ENCODE measurements at regions of chr11 and their contacts with region 1.

Region 1: GRCh38 chr11:25734592-25735211 is 597.2 kb upstream of the ANO3 start:
- DNase-seq: peak; percentile 7
- H3K4me3 Mint-ChIP-seq: no peak overlapping the region
- H3K27ac Mint-ChIP-seq: no peak overlapping the region
- H3K4me1 Mint-ChIP-seq: no peaks in the 10 kb centered on the region
- H3K27me3 Mint-ChIP-seq: no peaks in the 10 kb centered on the region
- CTCF ChIP-seq: peak; percentile 14

Region 2: DNA sequence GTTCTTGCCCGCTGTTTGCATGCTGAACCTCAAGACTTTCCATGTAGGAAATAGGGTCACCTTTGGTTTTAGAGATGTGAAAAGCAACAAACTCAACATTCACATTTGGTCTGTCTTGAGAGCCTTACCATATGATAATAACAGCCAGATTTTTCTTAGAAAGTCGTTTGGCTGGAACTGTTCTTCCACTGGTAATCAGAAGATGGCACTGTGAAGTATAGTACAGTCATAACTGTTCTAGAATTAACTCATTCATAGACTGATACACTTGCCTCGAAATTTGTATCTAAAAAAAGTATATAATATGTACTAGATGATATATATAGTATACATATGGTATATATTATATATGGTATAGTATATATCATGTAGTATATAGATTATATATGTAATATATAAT is 1225.6 kb before region 1 on chr11:
- CTCF ChIA-PET with region 1: no interaction called
- intact Hi-C with region 1: loop called (anchors 5 kb)
- DNase-seq: no peak
- H3K4me3 Mint-ChIP-seq: no peak overlapping the region
- H3K27ac Mint-ChIP-seq: no peak overlapping the region
- H3K4me1 Mint-ChIP-seq: peaks cover 24% of the 10 kb centered on the region
- H3K27me3 Mint-ChIP-seq: no peaks in the 10 kb centered on the region
- CTCF ChIP-seq: peak; percentile 20

Region 3: DNA sequence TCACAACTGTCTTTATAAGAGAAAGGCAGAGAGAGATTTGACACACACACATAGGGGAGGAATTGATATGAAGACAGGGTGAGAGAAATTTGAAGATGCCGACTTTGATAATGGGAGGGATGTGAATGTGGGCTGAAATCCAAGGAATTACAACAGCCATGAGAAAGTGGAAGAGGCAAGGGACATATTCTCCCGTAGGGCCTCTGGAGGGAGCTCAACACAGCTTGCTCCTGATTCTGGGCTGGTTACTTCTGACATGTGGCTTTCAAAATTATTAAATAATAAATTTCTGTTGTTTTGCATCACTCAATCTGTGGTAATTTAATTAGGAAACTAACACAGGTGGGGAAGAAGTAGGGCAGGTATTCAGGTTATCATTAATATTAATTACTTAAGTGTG is 954.9 kb before region 1 on chr11:
- CTCF ChIA-PET with region 1: no interaction called
- intact Hi-C with region 1: loop called (anchors 2 kb)
- DNase-seq: no peak
- H3K4me3 Mint-ChIP-seq: no peak overlapping the region
- H3K27ac Mint-ChIP-seq: no peak overlapping the region
- H3K4me1 Mint-ChIP-seq: no peaks in the 10 kb centered on the region
- H3K27me3 Mint-ChIP-seq: no peaks in the 10 kb centered on the region
- CTCF ChIP-seq: no peak